ENCODE measurements at regions of chr4 and their contacts with region 1.

Region 1: DNA sequence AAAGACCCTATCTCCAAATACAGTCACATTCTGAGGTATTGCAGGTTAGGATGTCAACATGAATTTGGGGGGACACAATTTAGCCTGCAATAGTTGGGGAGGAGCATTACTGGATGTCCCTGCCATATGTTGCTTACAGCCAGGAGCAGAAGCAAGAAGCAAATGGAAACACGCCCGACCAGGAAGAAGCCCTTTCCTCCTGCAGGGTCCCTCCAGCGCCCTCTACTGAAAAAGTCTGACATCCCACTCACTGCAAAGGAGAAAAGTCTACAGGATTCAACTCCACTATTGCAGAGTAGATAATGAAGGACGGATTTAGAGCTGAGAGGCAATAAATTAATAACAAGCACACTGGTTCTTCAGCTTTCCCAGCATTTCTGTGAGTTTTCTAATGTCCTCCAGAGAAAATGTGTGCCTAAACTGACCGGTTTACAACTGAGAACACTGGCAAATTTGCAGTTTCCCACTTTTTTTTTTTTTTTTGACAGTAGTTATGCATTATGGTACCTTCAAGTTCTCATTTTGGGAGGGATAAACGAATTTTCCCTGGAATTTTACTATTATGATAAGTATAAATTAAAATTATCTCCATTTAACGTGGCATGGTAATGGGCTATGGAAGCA is 31.7 kb downstream of the COQ2 start:
- DNase-seq: peak; percentile 69
- H3K4me3 Mint-ChIP-seq: no peak overlapping the region
- H3K27ac Mint-ChIP-seq: no peak overlapping the region
- H3K4me1 Mint-ChIP-seq: peaks cover 7% of the 10 kb centered on the region
- H3K27me3 Mint-ChIP-seq: no peaks in the 10 kb centered on the region
- CTCF ChIP-seq: peak; percentile 34

Region 2: DNA sequence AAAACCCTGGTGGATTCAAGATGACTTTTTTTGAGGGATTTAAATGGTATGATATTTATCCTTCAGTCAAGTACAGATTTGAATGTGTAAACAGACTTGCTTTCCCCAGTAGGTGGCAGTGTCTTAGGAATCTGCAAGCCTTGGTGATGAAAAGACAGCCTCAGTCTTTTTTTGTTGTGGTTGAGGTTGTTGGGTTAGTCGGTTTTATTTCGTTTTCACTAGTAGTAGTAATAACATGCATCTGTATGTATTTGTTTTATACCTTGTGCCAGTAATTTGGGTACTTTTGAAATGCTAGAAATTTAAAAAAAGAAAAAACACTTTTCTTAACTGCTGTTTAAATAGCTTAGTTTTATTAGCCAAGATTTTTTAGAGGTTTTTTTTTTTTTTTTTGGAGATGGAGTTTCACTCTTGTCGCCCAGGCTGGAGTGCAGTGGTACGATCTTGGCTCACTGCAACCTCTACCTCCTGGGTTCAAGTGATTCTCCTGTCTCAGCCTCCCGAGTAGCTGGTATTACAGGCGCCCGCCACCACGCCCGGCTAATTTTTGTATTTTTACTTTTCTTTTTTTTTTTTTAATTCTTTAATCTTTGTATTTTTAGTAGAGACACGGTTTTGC is 178.7 kb before region 1 on chr4:
- CTCF ChIA-PET with region 1: interaction called, 8 read pairs
- intact Hi-C with region 1: loop called (anchors 2 kb)
- DNase-seq: peak; percentile 52
- H3K4me3 Mint-ChIP-seq: no peak overlapping the region
- H3K27ac Mint-ChIP-seq: no peak overlapping the region
- H3K4me1 Mint-ChIP-seq: no peaks in the 10 kb centered on the region
- H3K27me3 Mint-ChIP-seq: no peaks in the 10 kb centered on the region
- CTCF ChIP-seq: peak; percentile 37

Region 3: GRCh38 chr4:83110223-83110945 is 142.5 kb before region 1 on chr4:
- CTCF ChIA-PET with region 1: interaction called, 4 read pairs
- intact Hi-C with region 1: loop called (anchors 5 kb)
- DNase-seq: peak; percentile 89
- H3K4me3 Mint-ChIP-seq: peak overlapping the region; percentile 66
- H3K27ac Mint-ChIP-seq: peak overlapping the region; percentile 61
- H3K4me1 Mint-ChIP-seq: peaks cover 21% of the 10 kb centered on the region
- H3K27me3 Mint-ChIP-seq: no peaks in the 10 kb centered on the region
- CTCF ChIP-seq: no peak

Region 4: DNA sequence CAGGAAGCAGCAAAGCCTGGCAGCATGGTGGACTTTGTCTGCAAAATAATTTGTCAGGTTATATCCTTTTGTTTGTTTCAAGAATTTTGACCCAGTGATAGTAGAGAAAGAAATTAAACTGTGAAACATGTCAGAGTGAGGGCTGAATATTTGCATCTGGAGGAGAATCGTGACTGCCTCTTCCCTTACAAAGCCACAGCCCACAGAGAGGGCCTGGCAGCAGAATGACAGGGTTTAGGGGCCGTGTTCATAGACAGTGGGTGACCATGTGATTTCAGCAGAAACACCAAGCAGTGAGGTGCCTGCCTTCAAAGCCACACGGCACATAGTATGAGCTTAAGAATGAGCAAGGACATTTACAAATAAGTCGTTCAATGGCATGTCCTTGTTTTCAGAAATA is 113.9 kb before region 1 on chr4:
- CTCF ChIA-PET with region 1: no interaction called
- intact Hi-C with region 1: no loop called
- DNase-seq: no peak
- H3K4me3 Mint-ChIP-seq: no peak overlapping the region
- H3K27ac Mint-ChIP-seq: no peak overlapping the region
- H3K4me1 Mint-ChIP-seq: no peaks in the 10 kb centered on the region
- H3K27me3 Mint-ChIP-seq: no peaks in the 10 kb centered on the region
- CTCF ChIP-seq: no peak

Measured in Calu3 (cell line).